A549 (cell line): ENCODE measurements at regions of chr5 and their contacts with region 1.

Region 1: GRCh38 chr5:34499001-34499734 is 157.0 kb upstream of the RAI14 start:
- DNase-seq: peak in 1 of 2 experiments; percentile 31
- ATAC-seq: peak; percentile 72 to 82
- H3K4me3 ChIP-seq: no peak overlapping the region
- H3K27ac ChIP-seq: peak overlapping the region; percentile 53 to 80; a peak in 5 of 6 replicates
- H3K4me1 ChIP-seq: peaks cover 32% of the 10 kb centered on the region
- CTCF ChIP-seq: no peak
- EP300 ChIP-seq: no peak
- POLR2A ChIP-seq: no peak
- RAD21 ChIP-seq: no peak

Region 2: DNA sequence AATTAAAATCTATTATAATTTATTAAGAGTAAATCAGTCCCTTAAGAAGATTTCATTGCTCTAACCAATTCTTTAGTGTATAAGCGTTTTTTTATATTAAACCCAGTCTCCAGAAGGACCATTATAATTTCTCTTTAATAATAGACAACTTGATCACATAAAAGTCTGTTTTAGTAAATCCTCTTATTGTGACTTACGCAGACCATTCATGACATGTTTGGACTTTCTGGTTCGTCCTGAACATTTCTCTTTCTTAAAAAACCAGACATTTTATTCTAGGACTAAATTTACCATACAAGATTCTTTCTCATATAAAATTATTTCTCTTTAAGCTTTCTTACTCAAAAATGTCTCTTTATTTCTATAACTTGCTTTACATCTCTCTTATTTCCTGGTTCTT is 39.3 kb before region 1 on chr5:
- CTCF ChIA-PET with region 1: no interaction called
- POLR2A ChIA-PET with region 1: no interaction called
- DNase-seq: no peak
- ATAC-seq: no peak
- H3K4me3 ChIP-seq: no peak overlapping the region
- H3K27ac ChIP-seq: no peak overlapping the region
- H3K4me1 ChIP-seq: no peaks in the 10 kb centered on the region
- CTCF ChIP-seq: no peak
- EP300 ChIP-seq: no peak
- POLR2A ChIP-seq: no peak
- RAD21 ChIP-seq: no peak

Region 3: GRCh38 chr5:34474573-34475021 is 24.6 kb before region 1 on chr5:
- CTCF ChIA-PET with region 1: interaction called, 28 read pairs
- POLR2A ChIA-PET with region 1: interaction called, 13 read pairs
- DNase-seq: peak; percentile 57 to 70
- ATAC-seq: peak; percentile 68 to 93; a peak in 5 of 6 replicates
- H3K4me3 ChIP-seq: no peak overlapping the region
- H3K27ac ChIP-seq: no peak overlapping the region
- H3K4me1 ChIP-seq: no peaks in the 10 kb centered on the region
- CTCF ChIP-seq: peak; percentile 92
- EP300 ChIP-seq: no peak
- POLR2A ChIP-seq: no peak
- RAD21 ChIP-seq: peak; percentile 90 to 94